Ascending aorta (tissue), 2 donors: ENCODE measurements at regions of chr15 and their contacts with region 1.

Region 1: DNA sequence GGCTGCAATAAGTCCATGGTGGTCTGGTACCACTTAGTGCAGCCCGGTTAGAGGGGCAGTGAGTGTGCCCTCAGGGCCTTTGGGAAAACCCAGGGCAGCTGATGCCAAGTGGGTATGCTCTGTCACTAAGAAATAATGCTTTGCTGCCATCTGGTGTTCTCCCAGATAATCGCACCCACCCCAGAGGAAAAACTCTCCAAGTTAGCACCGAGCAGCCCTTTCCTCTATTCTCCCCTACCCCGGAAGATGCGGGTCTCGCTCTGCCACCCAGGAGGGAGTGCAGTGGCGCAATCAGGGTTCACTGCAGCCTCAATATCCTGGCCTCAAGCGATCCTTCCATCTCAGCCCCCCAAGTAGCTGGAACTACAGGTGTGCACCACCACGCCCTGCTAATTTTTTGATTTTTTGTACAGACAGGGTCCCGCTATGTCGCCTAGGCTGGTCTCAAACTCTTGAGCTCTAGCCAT is 21.3 kb upstream of the DAPK2 start:
- DNase-seq: peak in 1 of 2 donors; percentile 81
- H3K4me3 ChIP-seq: no peak overlapping the region
- H3K27ac ChIP-seq: no peak overlapping the region
- H3K4me1 ChIP-seq: no peaks in the 10 kb centered on the region
- H3K27me3 ChIP-seq: no peaks in the 10 kb centered on the region
- CTCF ChIP-seq: peak; percentile 76 to 90 (median 84)

Region 2: DNA sequence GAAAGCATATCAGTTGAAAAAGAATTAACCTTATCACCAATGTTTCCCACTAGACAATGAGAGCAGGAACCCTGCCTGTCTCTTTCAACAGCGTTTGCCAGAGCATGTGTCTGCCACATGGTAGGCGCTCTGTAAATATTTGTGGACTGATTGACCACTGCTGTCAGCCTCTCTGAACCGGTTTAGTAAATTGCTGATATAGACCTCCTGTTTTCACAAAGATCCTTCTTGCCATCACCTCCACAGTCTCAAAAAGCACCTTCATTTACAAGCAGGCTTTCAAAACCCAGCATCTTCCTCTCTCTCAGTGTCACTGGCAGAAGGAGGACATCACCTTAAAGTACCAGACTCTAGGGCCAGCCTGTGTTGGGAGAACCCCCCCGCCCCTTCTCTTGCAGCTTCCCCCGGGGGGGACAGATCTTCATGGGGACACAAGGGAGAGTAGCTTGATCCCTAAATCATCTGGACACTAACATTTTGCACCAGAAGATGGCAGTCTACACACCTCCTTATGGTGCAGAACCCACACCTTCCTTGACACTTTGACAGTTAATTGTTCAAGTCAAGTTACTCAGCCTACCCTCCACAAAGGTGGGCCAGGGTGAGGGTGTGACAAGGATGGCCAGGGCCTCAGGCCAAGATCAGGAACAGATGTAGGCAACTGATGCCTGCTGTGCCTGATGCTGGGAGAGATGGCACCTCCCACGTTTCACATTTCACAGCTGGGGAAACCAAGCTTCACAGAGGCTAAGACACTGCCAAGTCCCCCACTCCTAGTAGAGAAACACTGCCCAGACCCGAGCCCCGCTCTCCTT is 601.0 kb before region 1 on chr15:
- intact Hi-C with region 1: loop called (anchors 10 kb)
- DNase-seq: peak in 1 of 2 donors; percentile 58
- H3K4me3 ChIP-seq: no peak overlapping the region
- H3K27ac ChIP-seq: no peak overlapping the region
- H3K4me1 ChIP-seq: peaks cover 0 to 5% of the 10 kb centered on the region in 2 donors
- H3K27me3 ChIP-seq: no peaks in the 10 kb centered on the region
- CTCF ChIP-seq: peak; percentile 45 to 65 (median 47)

Region 3: GRCh38 chr15:63610200-63610841 is 457.3 kb before region 1 on chr15:
- intact Hi-C with region 1: loop called (anchors 5 kb)
- DNase-seq: peak; percentile 43 to 89
- H3K4me3 ChIP-seq: no peak overlapping the region
- H3K27ac ChIP-seq: peak overlapping the region; percentile 52 to 58
- H3K4me1 ChIP-seq: peaks cover 0 to 11% of the 10 kb centered on the region in 2 donors
- H3K27me3 ChIP-seq: no peaks in the 10 kb centered on the region
- CTCF ChIP-seq: peak; percentile 57 to 77 (median 64)

Region 4: DNA sequence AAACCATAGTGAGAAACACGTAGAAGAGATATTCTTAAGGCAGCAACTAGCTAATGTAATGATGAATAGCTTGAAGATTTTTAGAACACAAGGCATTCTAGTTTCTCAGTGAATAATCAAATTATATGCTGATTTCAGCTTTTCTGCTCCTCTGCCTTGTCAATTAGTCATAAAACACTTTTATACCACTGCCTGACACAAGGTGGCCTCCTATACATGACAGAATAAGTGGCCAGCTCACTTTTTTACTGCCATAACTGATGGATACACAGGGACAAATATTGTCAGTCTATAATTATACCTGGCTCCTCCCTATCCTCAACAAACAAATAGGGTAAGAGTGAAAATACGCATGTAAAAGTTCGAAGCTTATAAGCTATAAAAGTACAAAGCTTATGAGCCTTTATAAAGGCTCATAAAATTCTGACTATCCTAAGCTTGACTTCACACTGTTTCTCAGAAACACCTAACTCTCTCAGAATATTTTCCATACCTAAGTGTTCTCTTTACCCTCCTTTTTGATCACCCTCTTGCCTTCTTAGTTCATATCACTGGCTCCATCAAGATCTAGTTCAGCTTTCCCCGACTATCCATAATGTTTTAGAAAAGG is 315.4 kb before region 1 on chr15:
- intact Hi-C with region 1: loop called (anchors 1 kb)
- DNase-seq: no peak
- H3K4me3 ChIP-seq: no peak overlapping the region
- H3K27ac ChIP-seq: no peak overlapping the region
- H3K4me1 ChIP-seq: no peaks in the 10 kb centered on the region
- H3K27me3 ChIP-seq: no peaks in the 10 kb centered on the region
- CTCF ChIP-seq: peak; percentile 46 to 69 (median 68)

Region 5: GRCh38 chr15:64137226-64138220 is 69.9 kb after region 1 on chr15:
- intact Hi-C with region 1: no loop called
- DNase-seq: no peak
- H3K4me3 ChIP-seq: no peak overlapping the region
- H3K27ac ChIP-seq: no peak overlapping the region
- H3K4me1 ChIP-seq: no peaks in the 10 kb centered on the region
- H3K27me3 ChIP-seq: no peaks in the 10 kb centered on the region
- CTCF ChIP-seq: peak in 1 of 3 experiments; percentile 5